Left colon (tissue), 2 donors: ENCODE measurements at regions of chr4 and their contacts with region 1.

Region 1: DNA sequence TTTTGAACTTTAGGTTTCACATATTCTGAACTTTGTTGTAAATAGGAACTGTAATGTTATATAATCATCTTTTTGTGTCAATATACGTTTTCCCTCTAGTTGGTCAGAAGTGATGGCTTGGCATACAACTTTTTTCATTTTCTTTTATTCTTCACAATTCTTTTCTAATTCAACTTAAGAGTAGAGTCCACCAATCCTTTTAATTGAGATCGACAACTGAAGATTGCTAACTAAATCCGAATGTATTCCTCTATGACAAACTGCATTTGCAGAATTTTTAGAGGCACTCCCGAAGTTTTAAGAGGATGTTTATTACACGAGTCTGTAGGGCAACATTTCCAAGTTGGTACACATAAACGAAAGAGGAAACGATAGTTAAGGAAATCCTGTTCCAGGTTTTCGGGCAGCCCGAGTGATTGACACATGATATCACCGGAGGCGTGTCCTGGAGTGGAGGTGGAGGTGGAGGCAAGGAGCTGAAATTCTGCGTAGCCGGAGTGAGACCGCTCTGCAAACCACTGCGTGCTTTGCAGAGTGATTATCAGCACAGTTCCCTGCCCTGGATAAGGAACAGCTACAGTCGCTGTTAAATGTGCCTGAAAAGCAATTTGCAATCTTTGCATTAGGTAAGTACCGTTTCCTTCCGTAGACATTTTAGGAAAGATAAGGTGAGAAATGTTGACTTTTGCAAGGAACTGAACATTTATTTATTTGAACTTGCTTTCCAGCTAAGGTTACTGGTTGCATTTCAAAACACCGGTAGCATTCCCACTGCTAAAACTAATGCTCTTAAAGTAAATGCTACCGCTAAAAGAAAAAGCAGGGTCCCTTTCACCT is at the start of gene SPRY1:
- DNase-seq: peak; percentile 87 to 93
- ATAC-seq: peak; percentile 69
- total RNA-seq, gene SPRY1: 27.2 to 29.0 TPM

Region 2: GRCh38 chr4:123463869-123464268 is 67.3 kb after region 1 on chr4:
- intact Hi-C with region 1: no loop called
- DNase-seq: no peak
- ATAC-seq: no peak

Region 3: DNA sequence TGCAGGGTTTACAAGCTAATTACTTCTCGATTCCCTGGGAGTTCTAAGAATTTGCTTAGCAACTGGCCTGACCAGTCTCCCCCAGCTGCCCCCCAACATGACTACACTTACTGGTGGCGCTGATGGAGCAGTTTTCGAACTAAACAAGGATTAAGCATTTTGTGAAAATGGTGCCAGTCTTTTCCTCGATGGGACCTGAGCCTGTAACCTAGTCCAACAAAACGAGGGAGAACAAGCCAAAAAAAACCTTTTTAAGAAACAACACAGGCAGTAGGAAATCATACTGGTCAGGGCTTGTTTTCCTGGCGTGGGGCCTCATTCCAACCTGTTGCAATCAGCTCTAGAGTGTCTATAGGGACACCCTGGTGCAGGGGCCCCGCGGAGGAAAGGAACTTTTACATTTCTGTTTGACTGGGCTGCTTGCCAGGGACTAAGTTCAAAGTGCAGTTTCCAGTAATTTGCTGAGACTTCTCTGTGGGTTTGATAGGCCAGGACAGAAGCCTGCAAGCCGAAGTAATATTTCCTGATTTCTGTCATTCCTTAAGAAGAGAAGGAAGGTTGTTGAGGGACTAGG is 158.8 kb after region 1 on chr4:
- intact Hi-C with region 1: loop called in 1 of 2 experiments (anchors 5 kb)
- DNase-seq: peak; percentile 89 to 93
- ATAC-seq: peak; percentile 87

Region 4: DNA sequence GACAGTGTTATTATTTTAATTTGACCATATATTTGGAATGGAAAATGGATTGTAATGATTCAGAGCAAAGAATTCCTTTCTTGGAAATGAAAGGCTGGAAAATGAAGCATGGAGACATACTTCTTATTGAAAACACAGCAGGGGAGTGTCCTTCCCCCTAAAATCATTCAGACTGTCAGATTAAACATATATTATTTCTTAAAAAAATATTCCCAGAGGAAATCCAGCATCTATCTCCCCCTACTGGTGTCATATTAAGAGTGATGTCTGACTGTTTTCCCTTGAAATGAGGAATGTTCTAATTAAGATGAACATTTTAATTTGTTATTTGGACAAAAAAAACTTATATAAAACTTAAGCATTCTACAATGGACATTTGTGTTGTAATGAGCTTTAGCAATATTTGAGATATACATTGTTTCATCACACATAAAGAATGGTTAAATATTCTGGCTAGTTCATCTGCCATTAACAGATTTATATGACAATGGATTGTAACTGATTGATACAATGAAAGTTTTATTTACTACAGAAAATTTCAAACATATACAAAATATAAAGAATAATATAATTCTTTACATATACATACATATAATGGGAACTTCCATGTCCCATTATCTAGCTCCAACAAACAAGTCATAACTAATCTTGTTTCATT is 264.7 kb after region 1 on chr4:
- intact Hi-C with region 1: loop called in 1 of 2 experiments (anchors 5 kb)
- DNase-seq: no peak
- ATAC-seq: no peak

Region 5: DNA sequence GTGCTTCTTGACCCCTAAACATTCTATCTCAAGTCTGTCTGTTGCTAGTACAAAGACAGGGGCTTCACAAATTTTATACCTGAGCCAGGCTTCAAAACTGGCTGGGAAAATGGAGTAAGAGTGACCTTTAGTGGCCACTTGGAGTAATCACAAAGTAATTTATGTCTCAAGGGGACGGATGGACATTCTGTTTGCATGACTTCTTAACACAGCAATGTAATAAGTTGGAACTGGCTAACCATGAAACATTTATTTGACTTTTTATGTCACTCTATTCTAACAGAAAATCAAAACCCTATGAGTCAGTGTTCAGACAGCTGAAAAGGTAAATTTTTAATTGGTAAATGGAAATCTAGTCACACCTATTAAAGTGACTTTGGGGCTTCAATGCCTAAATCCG is 715.4 kb after region 1 on chr4:
- intact Hi-C with region 1: loop called in 1 of 2 experiments (anchors 10 kb)
- DNase-seq: no peak
- ATAC-seq: no peak